ENCODE measurements at regions of chr10 and their contacts with region 1.

Region 1: DNA sequence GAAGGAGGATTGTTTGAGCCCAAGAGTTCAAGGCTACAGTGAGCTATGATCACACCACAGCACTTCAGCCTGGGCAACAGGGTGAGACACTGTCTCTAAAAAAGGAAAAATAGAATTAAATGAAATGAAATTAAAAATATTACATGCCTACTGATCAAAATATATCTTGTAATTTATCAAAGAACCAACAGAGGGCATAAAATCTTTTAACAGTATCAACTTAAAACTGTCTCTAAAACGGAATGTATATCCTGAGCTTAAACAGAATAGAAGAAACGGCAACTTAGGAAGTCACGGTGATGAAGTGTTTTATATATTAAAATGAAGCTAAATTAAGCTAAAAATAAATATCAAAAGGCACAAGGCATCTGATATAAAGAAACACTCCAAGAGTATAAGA is 78.8 kb downstream of the MTPAP start:
- DNase-seq: no peak
- ATAC-seq: no peak
- H3K4me3 ChIP-seq: no peak overlapping the region
- H3K4me3 Mint-ChIP-seq: no peak overlapping the region
- H3K27ac ChIP-seq: no peak overlapping the region
- H3K27ac Mint-ChIP-seq: no peak overlapping the region
- H3K4me1 ChIP-seq: no peaks in the 10 kb centered on the region
- H3K4me1 Mint-ChIP-seq: no peaks in the 10 kb centered on the region
- H3K27me3 ChIP-seq: peaks cover 0 to 4% (median 0%) of the 10 kb centered on the region in 4 experiments
- H3K27me3 Mint-ChIP-seq: peaks cover 16% of the 10 kb centered on the region
- CTCF ChIP-seq: peak; percentile 44

Region 2: GRCh38 chr10:29946953-29947700 is 323.1 kb before region 1 on chr10:
- CTCF ChIA-PET with region 1: no interaction called
- POLR2A ChIA-PET with region 1: no interaction called
- intact Hi-C with region 1: no loop called
- DNase-seq: no peak
- ATAC-seq: no peak
- H3K4me3 ChIP-seq: no peak overlapping the region
- H3K4me3 Mint-ChIP-seq: no peak overlapping the region
- H3K27ac ChIP-seq: no peak overlapping the region
- H3K27ac Mint-ChIP-seq: no peak overlapping the region
- H3K4me1 ChIP-seq: no peaks in the 10 kb centered on the region
- H3K4me1 Mint-ChIP-seq: no peaks in the 10 kb centered on the region
- H3K27me3 ChIP-seq: no peaks in the 10 kb centered on the region
- H3K27me3 Mint-ChIP-seq: no peaks in the 10 kb centered on the region
- CTCF ChIP-seq: no peak

Region 3: DNA sequence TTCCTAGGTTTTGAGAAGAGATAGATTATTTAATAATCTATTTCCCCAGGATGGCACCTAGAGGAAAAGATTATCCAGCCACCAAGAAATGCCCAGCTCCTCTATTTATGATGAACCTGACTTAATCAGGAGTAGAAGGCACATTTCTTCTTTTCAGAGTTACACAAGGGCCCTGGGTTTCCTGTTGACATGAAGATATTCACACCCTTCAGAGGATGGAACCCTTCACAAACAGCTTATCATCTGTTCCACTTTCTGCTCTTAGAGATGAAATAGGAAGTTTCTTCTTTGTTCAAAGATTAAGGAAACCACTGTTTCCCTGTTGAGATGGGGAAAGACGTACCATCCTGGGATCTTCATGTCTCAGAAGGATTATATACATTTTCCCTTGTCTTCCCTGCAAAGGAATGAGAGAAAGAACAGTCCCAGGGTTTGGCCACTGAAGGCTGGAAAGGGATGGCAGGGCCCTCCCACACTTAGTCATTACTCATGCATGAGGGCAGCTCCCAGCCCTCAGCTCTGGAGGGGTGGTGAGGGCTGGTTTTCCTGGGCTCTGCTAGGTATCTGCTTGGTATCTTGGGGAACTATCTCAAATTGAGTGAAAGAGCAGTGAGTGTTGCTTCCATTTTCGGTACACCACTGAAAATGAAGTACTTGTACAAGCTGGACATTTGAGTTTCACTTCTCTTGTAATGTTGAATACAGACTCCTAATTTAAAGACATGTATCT is 14.8 kb after region 1 on chr10:
- CTCF ChIA-PET with region 1: interaction called, 11 read pairs
- POLR2A ChIA-PET with region 1: no interaction called
- intact Hi-C with region 1: no loop called
- DNase-seq: peak; percentile 43
- ATAC-seq: peak; percentile 66
- H3K4me3 ChIP-seq: peak overlapping the region in 4 of 5 experiments; percentile 2 to 31 (median 13)
- H3K4me3 Mint-ChIP-seq: peak overlapping the region; percentile 77
- H3K27ac ChIP-seq: peak overlapping the region; percentile 87
- H3K27ac Mint-ChIP-seq: peak overlapping the region; percentile 91
- H3K4me1 ChIP-seq: peaks cover 35 to 42% of the 10 kb centered on the region in 2 donors
- H3K4me1 Mint-ChIP-seq: peaks cover 42% of the 10 kb centered on the region
- H3K27me3 ChIP-seq: no peaks in the 10 kb centered on the region
- H3K27me3 Mint-ChIP-seq: peaks cover 6% of the 10 kb centered on the region
- CTCF ChIP-seq: no peak

Measured in B cell (primary cell).